ENCODE measurements at regions of chr3 and their contacts with region 1.

Region 1: GRCh38 chr3:99499235-99500158 is 138.9 kb upstream of the COL8A1 start:
- DNase-seq: peak; percentile 72
- H3K4me3 ChIP-seq: no peak overlapping the region
- H3K27ac ChIP-seq: no peak overlapping the region
- H3K4me1 ChIP-seq: no peaks in the 10 kb centered on the region
- H3K27me3 ChIP-seq: no peaks in the 10 kb centered on the region
- CTCF ChIP-seq: peak; percentile 81

Region 2: DNA sequence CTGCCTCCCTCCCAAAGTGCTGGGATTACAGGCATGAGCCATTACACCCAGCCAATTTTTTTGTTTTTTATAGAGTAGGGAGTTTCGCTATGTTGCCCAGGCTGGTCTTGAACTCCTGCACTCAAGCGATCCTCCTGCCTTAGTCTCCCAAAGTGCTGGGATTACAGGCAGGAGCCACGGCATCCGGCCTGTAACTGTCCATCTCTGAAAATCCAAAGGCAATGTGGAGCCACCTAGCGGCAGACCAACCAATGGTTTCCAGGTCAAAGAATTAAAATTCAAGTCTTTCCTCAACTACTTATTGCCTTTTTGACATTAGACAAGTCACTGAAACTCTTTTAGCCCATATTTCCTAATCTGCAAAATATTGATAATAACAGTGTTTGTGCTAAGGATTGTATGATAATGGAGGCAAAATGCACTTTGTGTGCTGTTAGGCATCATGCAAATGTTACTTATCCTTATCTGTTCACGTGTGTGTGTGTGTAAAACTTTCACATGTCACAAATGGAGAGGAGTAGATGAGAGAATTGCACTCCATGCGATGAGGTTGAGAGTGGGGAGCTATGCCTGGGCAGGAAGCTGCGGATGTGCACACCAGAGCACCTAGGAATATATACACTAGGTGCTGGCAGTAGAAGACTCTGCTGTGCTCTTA is 187.6 kb after region 1 on chr3:
- CTCF ChIA-PET with region 1: interaction called, 4 read pairs
- POLR2A ChIA-PET with region 1: no interaction called
- intact Hi-C with region 1: loop called (anchors 1 kb)
- DNase-seq: peak; percentile 72
- H3K4me3 ChIP-seq: no peak overlapping the region
- H3K27ac ChIP-seq: no peak overlapping the region
- H3K4me1 ChIP-seq: peaks cover 21% of the 10 kb centered on the region
- H3K27me3 ChIP-seq: no peaks in the 10 kb centered on the region
- CTCF ChIP-seq: peak; percentile 74

Region 3: DNA sequence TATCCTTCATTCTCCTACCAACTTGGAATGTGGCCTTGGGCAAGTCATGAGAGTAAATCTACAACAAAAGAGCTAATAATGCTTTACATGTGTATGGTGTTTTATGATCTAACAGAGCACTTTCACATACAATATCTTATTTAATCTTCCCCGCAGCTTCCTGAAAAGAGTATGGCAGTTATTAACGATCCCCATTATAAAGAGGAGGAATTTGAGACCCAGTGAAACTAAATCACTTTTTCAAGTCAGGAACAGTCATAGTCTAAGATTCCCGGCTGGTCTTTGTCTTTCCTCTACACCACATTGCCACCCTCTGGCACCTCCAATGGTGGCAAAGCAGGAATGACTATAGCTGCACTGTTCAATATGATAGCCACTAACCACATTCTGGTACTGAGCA is 248.4 kb after region 1 on chr3:
- CTCF ChIA-PET with region 1: interaction called, 5 read pairs
- POLR2A ChIA-PET with region 1: no interaction called
- intact Hi-C with region 1: loop called (anchors 2 kb)
- DNase-seq: peak; percentile 83
- H3K4me3 ChIP-seq: no peak overlapping the region
- H3K27ac ChIP-seq: no peak overlapping the region
- H3K4me1 ChIP-seq: peaks cover 5% of the 10 kb centered on the region
- H3K27me3 ChIP-seq: no peaks in the 10 kb centered on the region
- CTCF ChIP-seq: peak; percentile 66

Measured in A673 (cell line).